WTC11 (cell line): ENCODE measurements at regions of chr3 and their contacts with region 1.

Region 1: GRCh38 chr3:15527031-15527459 is 5.5 kb upstream of the COLQ start:
- DNase-seq: peak; percentile 76
- ATAC-seq: peak; percentile 100
- H3K4me3 Mint-ChIP-seq: no peak overlapping the region
- H3K27ac Mint-ChIP-seq: no peak overlapping the region
- H3K4me1 Mint-ChIP-seq: peaks cover 14% of the 10 kb centered on the region
- H3K27me3 Mint-ChIP-seq: peaks cover 32% of the 10 kb centered on the region
- CTCF ChIP-seq: peak; percentile 44

Region 2: DNA sequence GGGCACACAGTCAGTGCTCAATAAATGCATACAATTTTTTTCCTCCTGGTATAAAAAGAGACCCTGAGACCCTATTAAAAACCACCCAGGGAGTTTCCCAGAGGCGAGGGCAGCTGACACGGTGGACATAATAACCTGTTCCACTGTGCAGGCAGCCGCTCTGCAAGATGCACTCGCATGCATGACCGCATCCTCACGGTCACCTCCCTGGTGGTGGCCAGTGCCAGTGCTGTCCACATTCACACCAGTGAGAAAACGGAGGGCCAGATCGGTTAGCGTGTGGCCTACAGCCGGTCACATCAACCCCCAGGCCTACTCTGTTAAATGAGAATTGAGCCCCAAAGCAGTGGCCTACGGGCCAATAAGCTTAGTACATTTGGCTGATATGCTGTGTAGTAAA is 219.5 kb before region 1 on chr3:
- CTCF ChIA-PET with region 1: no interaction called
- POLR2A ChIA-PET with region 1: no interaction called
- DNase-seq: no peak
- ATAC-seq: no peak
- H3K4me3 Mint-ChIP-seq: no peak overlapping the region
- H3K27ac Mint-ChIP-seq: no peak overlapping the region
- H3K4me1 Mint-ChIP-seq: peaks cover 27% of the 10 kb centered on the region
- H3K27me3 Mint-ChIP-seq: no peaks in the 10 kb centered on the region
- CTCF ChIP-seq: no peak

Region 3: DNA sequence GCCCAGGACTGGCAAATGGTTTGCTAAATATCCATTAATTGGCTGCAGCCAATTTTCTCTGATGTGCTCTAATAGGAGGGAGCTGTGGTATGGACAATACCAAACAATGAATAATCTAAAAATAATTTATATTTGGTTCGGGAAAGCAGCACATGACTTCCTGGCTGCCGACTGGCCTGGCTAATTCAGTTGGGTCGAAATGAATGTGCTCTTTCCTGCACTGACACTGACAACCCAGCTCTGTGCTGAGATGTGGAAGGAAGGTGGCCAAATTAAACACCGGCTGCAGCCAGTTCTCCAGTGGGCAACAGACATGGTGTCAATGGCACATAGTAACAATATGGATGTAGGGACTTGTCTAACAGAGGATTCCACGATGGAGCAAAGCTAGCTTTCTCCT is 15.6 kb after region 1 on chr3:
- CTCF ChIA-PET with region 1: interaction called, 12 read pairs
- POLR2A ChIA-PET with region 1: no interaction called
- DNase-seq: no peak
- ATAC-seq: no peak
- H3K4me3 Mint-ChIP-seq: no peak overlapping the region
- H3K27ac Mint-ChIP-seq: no peak overlapping the region
- H3K4me1 Mint-ChIP-seq: no peaks in the 10 kb centered on the region
- H3K27me3 Mint-ChIP-seq: peaks cover 6% of the 10 kb centered on the region; the same call in 1 of the 2 replicates
- CTCF ChIP-seq: no peak

Region 4: DNA sequence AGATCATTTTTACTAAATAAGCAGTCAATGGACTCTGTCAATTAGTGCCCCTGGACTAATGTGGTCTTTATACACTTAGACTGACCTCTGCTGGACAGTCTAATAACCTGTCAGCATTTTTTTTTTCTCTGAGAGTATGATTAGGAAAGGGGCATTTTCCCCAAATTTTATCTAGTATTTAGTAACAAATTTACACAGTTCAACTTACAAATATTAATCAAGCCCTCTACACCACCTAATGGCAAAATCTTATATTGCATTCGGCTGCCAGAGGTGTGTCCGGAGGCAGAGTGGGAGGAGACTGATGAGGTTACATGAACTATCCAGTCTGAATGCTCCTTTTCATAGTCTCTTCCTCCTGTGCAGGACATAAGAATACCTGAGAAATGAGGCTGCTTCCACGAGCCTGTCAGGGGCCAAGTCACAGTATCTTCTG is 30.5 kb after region 1 on chr3:
- CTCF ChIA-PET with region 1: interaction called, 37 read pairs
- POLR2A ChIA-PET with region 1: no interaction called
- DNase-seq: peak; percentile 47
- ATAC-seq: peak; percentile 98
- H3K4me3 Mint-ChIP-seq: no peak overlapping the region
- H3K27ac Mint-ChIP-seq: no peak overlapping the region
- H3K4me1 Mint-ChIP-seq: peaks cover 8% of the 10 kb centered on the region
- H3K27me3 Mint-ChIP-seq: no peaks in the 10 kb centered on the region
- CTCF ChIP-seq: peak; percentile 36; the same call in 1 of the 2 replicates

Region 5: DNA sequence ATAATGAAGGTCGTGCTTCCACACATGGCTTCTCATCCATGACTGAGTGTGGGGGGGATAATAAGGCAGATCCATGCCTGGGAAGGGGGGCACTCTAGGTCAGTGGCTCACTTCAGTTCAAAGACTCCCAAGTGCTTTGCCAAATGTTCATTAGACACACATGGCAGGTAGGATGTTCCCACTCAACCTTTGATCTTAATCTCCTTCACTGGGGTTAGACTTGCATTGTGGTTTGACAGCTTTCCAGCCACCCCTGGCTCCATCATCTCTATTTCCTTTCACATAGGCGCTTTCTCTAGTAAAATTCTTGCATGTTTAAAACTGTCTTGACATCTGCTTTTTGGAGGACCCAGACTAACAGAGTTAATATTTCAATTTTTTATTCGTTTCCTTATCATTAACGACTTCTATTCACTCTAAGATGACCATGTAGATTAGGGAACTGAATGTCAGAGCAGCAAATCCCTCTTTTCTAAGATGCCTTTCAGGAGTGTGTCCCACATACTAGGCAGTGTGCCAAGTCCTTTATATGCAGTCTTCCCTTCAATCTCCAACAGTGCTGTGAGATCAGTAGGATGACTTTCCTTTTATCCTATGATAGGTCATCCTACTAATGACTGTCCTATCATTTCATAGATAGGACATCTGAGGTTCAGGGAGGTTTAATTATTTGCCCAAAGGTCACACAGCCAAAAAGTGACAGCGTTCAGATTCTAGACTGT is 132.4 kb after region 1 on chr3:
- CTCF ChIA-PET with region 1: no interaction called
- POLR2A ChIA-PET with region 1: no interaction called
- DNase-seq: no peak
- ATAC-seq: no peak
- H3K4me3 Mint-ChIP-seq: no peak overlapping the region
- H3K27ac Mint-ChIP-seq: no peak overlapping the region
- H3K4me1 Mint-ChIP-seq: peaks cover 6% of the 10 kb centered on the region
- H3K27me3 Mint-ChIP-seq: no peaks in the 10 kb centered on the region; the same call in 1 of the 2 replicates
- CTCF ChIP-seq: no peak